WTC11 (cell line): ENCODE measurements at regions of chr3 and their contacts with region 1.

Region 1: GRCh38 chr3:170078620-170079281 is 41.0 kb downstream of the GPR160 start:
- DNase-seq: peak; percentile 23
- ATAC-seq: peak; percentile 84
- H3K4me3 Mint-ChIP-seq: no peak overlapping the region
- H3K27ac Mint-ChIP-seq: peak overlapping the region; percentile 13
- H3K4me1 Mint-ChIP-seq: peaks cover 8% of the 10 kb centered on the region
- H3K27me3 Mint-ChIP-seq: no peaks in the 10 kb centered on the region; the same call in 1 of the 2 replicates
- CTCF ChIP-seq: no peak

Region 2: DNA sequence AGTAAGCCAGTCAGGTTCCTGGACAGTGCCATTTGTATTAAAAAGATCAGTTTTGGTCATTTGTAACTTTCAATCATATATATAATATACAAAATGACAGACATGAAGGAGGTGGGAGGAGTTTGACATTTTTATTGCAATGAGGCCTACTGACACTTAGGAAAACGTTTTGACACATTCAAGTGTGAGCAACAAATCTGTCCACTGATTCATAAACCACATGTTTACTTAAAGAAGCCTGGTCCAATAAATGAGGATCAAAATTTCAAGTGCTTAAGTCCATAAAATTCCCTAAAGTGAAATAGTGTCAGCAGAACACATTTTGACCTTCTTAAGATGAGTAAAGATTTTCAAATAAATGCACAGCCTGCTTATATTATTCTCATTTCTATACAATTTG is 552.5 kb before region 1 on chr3:
- CTCF ChIA-PET with region 1: no interaction called
- POLR2A ChIA-PET with region 1: no interaction called
- DNase-seq: no peak
- ATAC-seq: no peak
- H3K4me3 Mint-ChIP-seq: no peak overlapping the region
- H3K27ac Mint-ChIP-seq: no peak overlapping the region
- H3K4me1 Mint-ChIP-seq: peaks cover 48% of the 10 kb centered on the region
- H3K27me3 Mint-ChIP-seq: no peaks in the 10 kb centered on the region
- CTCF ChIP-seq: no peak

Region 3: DNA sequence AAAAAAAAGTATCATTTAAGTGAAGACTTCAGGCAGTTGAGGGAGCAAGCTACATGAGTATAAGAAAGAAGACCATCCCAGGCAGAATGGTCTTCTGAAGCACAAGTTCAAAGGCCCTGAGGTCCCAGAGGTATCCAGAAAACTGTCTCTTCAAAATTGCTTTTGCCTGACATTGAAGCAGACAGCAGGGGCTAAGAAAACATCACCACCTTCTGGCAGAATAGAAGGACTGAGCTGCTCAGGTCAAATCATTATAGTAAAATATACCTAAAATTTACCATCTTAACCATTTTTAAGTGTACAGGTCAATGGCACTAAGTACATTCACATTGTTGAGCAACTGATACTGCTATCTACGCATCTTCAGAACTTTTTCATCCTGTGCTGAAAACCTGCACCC is 24.5 kb before region 1 on chr3:
- CTCF ChIA-PET with region 1: interaction called, 14 read pairs
- POLR2A ChIA-PET with region 1: no interaction called
- DNase-seq: no peak
- ATAC-seq: no peak
- H3K4me3 Mint-ChIP-seq: no peak overlapping the region
- H3K27ac Mint-ChIP-seq: no peak overlapping the region
- H3K4me1 Mint-ChIP-seq: peaks cover 41% of the 10 kb centered on the region
- H3K27me3 Mint-ChIP-seq: no peaks in the 10 kb centered on the region
- CTCF ChIP-seq: no peak

Region 4: DNA sequence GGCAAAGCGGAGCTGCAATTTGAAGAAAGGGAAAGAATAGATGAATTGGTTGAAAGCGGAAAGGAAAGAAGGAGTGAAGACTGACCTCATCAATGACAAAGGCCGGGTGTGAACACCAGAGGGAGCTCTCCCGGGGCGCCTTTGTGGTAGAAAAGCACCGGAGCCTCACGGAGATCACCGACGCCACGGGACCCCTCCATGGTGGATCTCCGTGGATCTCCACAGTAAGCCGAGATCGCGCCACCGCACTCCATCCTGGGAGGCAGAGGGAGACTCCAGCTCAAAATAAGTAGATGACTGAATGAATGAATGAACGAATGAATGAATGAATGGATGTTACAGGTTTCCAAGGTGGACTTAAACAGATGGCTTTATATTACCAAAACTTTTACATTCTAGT is 16.0 kb before region 1 on chr3:
- CTCF ChIA-PET with region 1: interaction called, 38 read pairs
- POLR2A ChIA-PET with region 1: no interaction called
- DNase-seq: peak; percentile 68
- ATAC-seq: peak; percentile 64
- H3K4me3 Mint-ChIP-seq: no peak overlapping the region
- H3K27ac Mint-ChIP-seq: peak overlapping the region; percentile 83
- H3K4me1 Mint-ChIP-seq: peaks cover 46% of the 10 kb centered on the region
- H3K27me3 Mint-ChIP-seq: no peaks in the 10 kb centered on the region
- CTCF ChIP-seq: no peak

Region 5: GRCh38 chr3:170089862-170090600 is 11.3 kb after region 1 on chr3:
- CTCF ChIA-PET with region 1: interaction called, 14 read pairs
- POLR2A ChIA-PET with region 1: no interaction called
- DNase-seq: no peak
- ATAC-seq: no peak
- H3K4me3 Mint-ChIP-seq: no peak overlapping the region
- H3K27ac Mint-ChIP-seq: no peak overlapping the region
- H3K4me1 Mint-ChIP-seq: no peaks in the 10 kb centered on the region
- H3K27me3 Mint-ChIP-seq: no peaks in the 10 kb centered on the region
- CTCF ChIP-seq: no peak